ENCODE measurements at regions of chr4 and their contacts with region 1.

Region 1: GRCh38 chr4:6873792-6874461 is 35.7 kb upstream of the TBC1D14 start:
- DNase-seq: peak in 2 of 3 donors; percentile 57 to 61
- H3K4me3 ChIP-seq: no peak overlapping the region
- H3K4me3 Mint-ChIP-seq: no peak overlapping the region
- H3K27ac ChIP-seq: peak overlapping the region in 1 of 2 donors; percentile 2
- H3K27ac Mint-ChIP-seq: peak overlapping the region in 3 of 7 donors; percentile 15 to 82 (median 36)
- H3K4me1 ChIP-seq: peaks cover 45 to 56% of the 10 kb centered on the region in 2 donors
- H3K4me1 Mint-ChIP-seq: peaks cover 53% of the 10 kb centered on the region
- H3K27me3 ChIP-seq: no peaks in the 10 kb centered on the region
- H3K27me3 Mint-ChIP-seq: no peaks in the 10 kb centered on the region
- CTCF ChIP-seq: peak; percentile 83

Region 2: DNA sequence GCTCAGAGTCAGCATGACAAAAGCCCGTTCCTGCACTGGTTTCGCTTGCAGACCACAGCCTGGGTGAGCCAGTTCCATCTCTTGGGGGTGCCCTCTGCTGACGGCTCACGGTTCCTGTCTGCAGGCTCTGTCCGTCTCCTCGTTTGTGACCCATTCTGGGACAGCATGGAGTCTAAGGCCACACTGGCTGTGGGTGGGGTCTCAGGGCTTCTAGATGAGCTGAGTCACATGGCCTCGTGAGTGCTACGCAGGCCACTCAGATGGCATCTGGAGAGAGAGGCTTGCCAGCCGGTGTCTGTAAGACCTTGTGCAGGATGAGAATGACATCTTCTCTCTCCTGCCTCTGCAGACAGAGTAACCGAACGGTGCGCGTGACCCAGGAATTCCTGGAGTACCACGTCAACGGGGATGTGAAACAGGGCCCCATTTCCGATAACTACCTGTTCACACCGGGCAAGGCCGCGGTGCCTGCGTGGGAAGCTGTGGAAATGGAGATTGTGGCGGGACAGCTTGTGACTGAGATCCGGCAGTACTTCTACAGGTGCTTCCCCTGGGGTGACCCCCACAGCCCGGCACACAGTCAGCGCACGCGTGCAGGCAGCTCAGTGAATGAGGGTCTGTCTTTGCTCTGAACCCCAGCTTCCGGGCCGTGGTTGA is 265.0 kb before region 1 on chr4:
- intact Hi-C with region 1: no loop called
- DNase-seq: no peak
- H3K4me3 ChIP-seq: no peak overlapping the region
- H3K4me3 Mint-ChIP-seq: no peak overlapping the region
- H3K27ac ChIP-seq: no peak overlapping the region
- H3K27ac Mint-ChIP-seq: peak overlapping the region in 1 of 7 donors; percentile 38
- H3K4me1 ChIP-seq: no peaks in the 10 kb centered on the region
- H3K4me1 Mint-ChIP-seq: peaks cover 2% of the 10 kb centered on the region
- H3K27me3 ChIP-seq: no peaks in the 10 kb centered on the region
- H3K27me3 Mint-ChIP-seq: peaks cover 0 to 3% (median 0%) of the 10 kb centered on the region in 3 donors
- CTCF ChIP-seq: no peak

Region 3: GRCh38 chr4:6783053-6783981 is 90.6 kb before region 1 on chr4:
- intact Hi-C with region 1: loop called in 1 of 2 experiments (anchors 5 kb)
- DNase-seq: peak; percentile 75 to 81 (median 79)
- H3K4me3 ChIP-seq: peak overlapping the region; percentile 75 to 98 (median 81)
- H3K4me3 Mint-ChIP-seq: peak overlapping the region; percentile 84 to 88
- H3K27ac ChIP-seq: peak overlapping the region; percentile 88 to 92
- H3K27ac Mint-ChIP-seq: peak overlapping the region; percentile 76 to 92 (median 91)
- H3K4me1 ChIP-seq: peaks cover 30 to 46% of the 10 kb centered on the region in 2 donors
- H3K4me1 Mint-ChIP-seq: peaks cover 58% of the 10 kb centered on the region
- H3K27me3 ChIP-seq: no peaks in the 10 kb centered on the region
- H3K27me3 Mint-ChIP-seq: peaks cover 0 to 4% (median 2%) of the 10 kb centered on the region in 3 donors
- CTCF ChIP-seq: no peak

Region 4: GRCh38 chr4:6794189-6794588 is 79.7 kb before region 1 on chr4:
- intact Hi-C with region 1: loop called in 1 of 2 experiments (anchors 5 kb)
- DNase-seq: no peak
- H3K4me3 ChIP-seq: no peak overlapping the region
- H3K4me3 Mint-ChIP-seq: no peak overlapping the region
- H3K27ac ChIP-seq: peak overlapping the region in 1 of 2 donors; percentile 46
- H3K27ac Mint-ChIP-seq: peak overlapping the region in 4 of 7 donors; percentile 1 to 17 (median 8)
- H3K4me1 ChIP-seq: no peaks in the 10 kb centered on the region
- H3K4me1 Mint-ChIP-seq: peaks cover 34% of the 10 kb centered on the region
- H3K27me3 ChIP-seq: no peaks in the 10 kb centered on the region
- H3K27me3 Mint-ChIP-seq: no peaks in the 10 kb centered on the region
- CTCF ChIP-seq: no peak

Region 5: GRCh38 chr4:6806924-6807636 is 66.8 kb before region 1 on chr4:
- intact Hi-C with region 1: loop called in 1 of 2 experiments (anchors 5 kb)
- DNase-seq: peak; percentile 82 to 94 (median 90)
- H3K4me3 ChIP-seq: peak overlapping the region in 2 of 3 experiments; percentile 27 to 50
- H3K4me3 Mint-ChIP-seq: peak overlapping the region in 1 of 2 donors; percentile 67
- H3K27ac ChIP-seq: peak overlapping the region; percentile 95 to 96
- H3K27ac Mint-ChIP-seq: peak overlapping the region; percentile 98 to 99 (median 99)
- H3K4me1 ChIP-seq: peaks cover 51 to 68% of the 10 kb centered on the region in 2 donors
- H3K4me1 Mint-ChIP-seq: peaks cover 69% of the 10 kb centered on the region
- H3K27me3 ChIP-seq: no peaks in the 10 kb centered on the region
- H3K27me3 Mint-ChIP-seq: no peaks in the 10 kb centered on the region
- CTCF ChIP-seq: no peak